Activated naive CD8-positive, alpha-beta T cell treated with anti-CD3 and anti-CD28 coated beads, Interleukin-2, amount 10 ng/mL, durations not matched to agents 7 days and 5 days (primary cell): ENCODE measurements at regions of chr16 and their contacts with region 1.

Region 1: DNA sequence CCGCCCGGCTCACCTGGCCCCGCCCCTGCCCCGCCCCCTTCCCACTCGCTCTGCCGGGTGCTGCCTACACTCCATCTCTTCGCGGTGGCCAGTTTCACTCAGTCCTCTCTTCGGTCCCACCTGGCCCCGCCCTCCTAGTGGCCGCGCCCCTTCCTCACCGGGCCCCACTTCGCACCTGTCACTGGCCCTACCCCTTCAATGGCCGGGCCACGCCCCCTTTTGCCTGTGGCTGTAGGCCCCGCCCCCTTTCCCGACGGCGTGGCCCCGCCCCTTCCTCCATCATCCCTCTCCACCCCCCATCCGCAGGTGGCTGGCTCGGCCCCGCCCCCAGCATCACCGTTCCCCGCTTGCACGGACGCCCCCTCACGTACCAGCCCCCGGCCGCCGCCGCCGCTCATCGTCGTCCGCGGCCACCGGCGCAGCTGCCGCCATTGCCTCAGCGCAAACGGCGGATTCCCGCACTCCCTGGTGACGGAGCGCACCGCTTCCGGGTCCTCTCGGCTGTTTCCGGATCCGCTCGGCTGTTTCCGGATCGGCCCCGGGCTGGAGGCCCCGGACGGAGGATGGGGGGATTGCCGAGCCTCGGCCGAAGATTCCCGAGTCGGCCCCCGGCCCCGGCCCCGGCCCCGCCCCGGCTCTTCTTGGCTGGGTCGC is at the start of gene RABEP2:
- DNase-seq: peak; percentile 99
- ATAC-seq: peak; percentile 88
- H3K4me3 Mint-ChIP-seq: peak within 1 kb of the TSS; percentile 99
- H3K27ac Mint-ChIP-seq: peak within 1 kb of the TSS; percentile 98
- H3K4me1 Mint-ChIP-seq: peaks cover 20% of the 10 kb centered on the region
- H3K27me3 Mint-ChIP-seq: no peaks in the 10 kb centered on the region
- total RNA-seq, gene RABEP2: 23.7 to 25.6 TPM

Region 2: GRCh38 chr16:28905800-28906372 is 19.0 kb before region 1 on chr16:
- POLR2A ChIA-PET with region 1: no interaction called
- DNase-seq: no peak
- ATAC-seq: no peak
- H3K4me3 Mint-ChIP-seq: no peak overlapping the region
- H3K27ac Mint-ChIP-seq: no peak overlapping the region
- H3K4me1 Mint-ChIP-seq: no peaks in the 10 kb centered on the region
- H3K27me3 Mint-ChIP-seq: no peaks in the 10 kb centered on the region

Region 3: DNA sequence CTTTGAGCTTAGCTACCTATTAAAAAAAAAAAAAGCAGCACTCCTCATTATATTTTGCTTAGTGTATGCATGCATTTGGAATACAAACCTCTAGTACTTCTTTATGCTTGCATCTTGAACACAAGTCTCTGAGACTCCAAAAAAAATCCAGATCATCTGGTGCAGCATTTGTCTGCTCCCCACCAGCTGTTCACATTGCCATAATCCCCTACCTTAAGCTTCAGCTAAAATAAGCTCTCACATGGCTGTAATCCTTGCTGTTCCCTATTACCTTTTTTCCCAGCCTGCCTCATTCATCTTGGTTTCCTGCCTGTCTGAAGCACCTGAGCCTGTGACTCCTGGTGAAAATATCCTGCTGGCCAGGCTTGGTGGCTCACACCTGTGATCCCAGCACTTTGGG is 18.4 kb after region 1 on chr16:
- POLR2A ChIA-PET with region 1: interaction called, 12 read pairs
- DNase-seq: no peak
- ATAC-seq: no peak
- H3K4me3 Mint-ChIP-seq: no peak overlapping the region
- H3K27ac Mint-ChIP-seq: no peak overlapping the region
- H3K4me1 Mint-ChIP-seq: peaks cover 13% of the 10 kb centered on the region
- H3K27me3 Mint-ChIP-seq: peaks cover 5% of the 10 kb centered on the region